ENCODE measurements at regions of chr4 and their contacts with region 1.

Region 1: DNA sequence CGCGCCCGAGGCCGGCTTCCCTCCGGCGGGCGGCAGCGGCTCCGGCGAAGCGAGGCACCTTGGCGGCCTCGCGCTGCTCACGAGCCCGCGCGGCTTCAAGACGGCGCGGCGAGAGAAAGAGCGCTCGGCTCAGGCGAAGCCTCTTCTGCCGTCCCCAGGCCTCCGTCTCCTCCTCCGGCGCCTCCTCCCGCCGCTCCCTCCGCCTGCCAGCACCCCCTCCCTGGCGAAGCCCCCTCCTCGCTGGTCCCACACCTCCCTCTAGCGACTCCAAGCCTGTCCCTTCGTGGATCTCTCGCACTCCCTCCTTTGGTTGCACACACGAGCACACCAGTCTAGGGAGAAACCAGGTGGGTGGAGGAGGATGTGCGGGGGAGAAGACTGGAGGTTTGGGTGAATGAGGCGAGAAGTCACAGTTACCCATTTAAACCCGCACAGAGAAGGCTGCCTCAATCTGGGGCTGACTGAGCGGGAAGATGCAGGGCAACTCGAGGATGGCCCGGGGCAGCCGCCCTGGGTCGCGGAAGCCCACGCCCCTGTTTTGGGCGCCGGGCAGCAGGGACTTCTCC is at the start of gene CAMK2D:
- DNase-seq: peak; percentile 82 to 93 (median 85)
- H3K4me3 ChIP-seq: peak within 1 kb of the TSS; percentile 73 to 87
- H3K4me3 Mint-ChIP-seq: peak within 1 kb of the TSS; percentile 93 to 98 (median 96)
- H3K27ac ChIP-seq: peak within 1 kb of the TSS; percentile 92
- H3K27ac Mint-ChIP-seq: peak within 1 kb of the TSS; percentile 91 to 100 (median 99)
- H3K4me1 ChIP-seq: peaks cover 36% of the 10 kb centered on the region
- H3K4me1 Mint-ChIP-seq: peaks cover 24 to 54% (median 25%) of the 10 kb centered on the region in 4 donors
- H3K27me3 ChIP-seq: no peaks in the 10 kb centered on the region
- H3K27me3 Mint-ChIP-seq: no peaks in the 10 kb centered on the region
- total RNA-seq, gene CAMK2D: 32.1 to 36.4 TPM

Region 2: DNA sequence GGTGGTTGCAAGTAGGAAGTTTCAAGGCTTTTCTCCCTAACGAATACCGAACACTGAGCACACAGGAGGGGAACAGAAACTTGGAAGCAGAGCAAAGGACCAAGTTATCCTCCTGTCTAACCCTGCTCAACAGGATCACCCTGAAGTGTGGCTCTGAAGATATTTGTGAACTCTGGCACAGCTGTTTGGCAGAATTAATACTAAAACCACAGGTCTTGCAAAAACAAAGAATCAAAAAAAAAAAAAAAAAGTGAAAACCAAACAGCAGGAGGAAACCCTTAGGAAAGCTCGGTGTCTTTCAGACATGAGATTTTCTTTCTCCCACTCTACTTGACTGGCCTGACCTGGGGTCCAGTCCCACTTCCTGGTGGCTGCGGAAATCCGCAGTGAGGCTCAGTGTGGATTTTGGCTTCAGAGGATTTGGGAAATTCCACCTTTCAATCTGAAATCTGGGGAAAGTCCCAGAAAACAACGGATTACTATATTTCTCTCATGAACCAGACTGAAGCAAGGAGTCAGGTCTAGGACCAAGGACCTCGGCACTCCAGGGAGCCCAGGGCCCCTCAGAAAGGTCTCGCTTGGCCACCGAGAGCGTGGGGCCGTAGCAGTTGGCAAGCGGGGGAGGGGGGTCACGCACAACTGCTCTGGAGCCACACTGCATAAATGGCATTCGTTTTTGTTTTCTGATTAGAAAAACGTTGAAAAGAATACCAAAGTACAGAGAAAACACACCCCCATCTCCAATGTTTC is 1476.9 kb before region 1 on chr4:
- CTCF ChIA-PET with region 1: no interaction called
- POLR2A ChIA-PET with region 1: no interaction called
- intact Hi-C with region 1: loop called (anchors 2 kb)
- DNase-seq: peak in 3 of 5 donors; percentile 15 to 22 (median 15)
- H3K4me3 ChIP-seq: peak overlapping the region; percentile 88 to 94
- H3K4me3 Mint-ChIP-seq: peak overlapping the region; percentile 92 to 98 (median 96)
- H3K27ac ChIP-seq: peak overlapping the region; percentile 79
- H3K27ac Mint-ChIP-seq: peak overlapping the region; percentile 91 to 99 (median 94)
- H3K4me1 ChIP-seq: peaks cover 85% of the 10 kb centered on the region
- H3K4me1 Mint-ChIP-seq: peaks cover 58 to 96% (median 75%) of the 10 kb centered on the region in 4 donors
- H3K27me3 ChIP-seq: no peaks in the 10 kb centered on the region
- H3K27me3 Mint-ChIP-seq: no peaks in the 10 kb centered on the region

Region 3: DNA sequence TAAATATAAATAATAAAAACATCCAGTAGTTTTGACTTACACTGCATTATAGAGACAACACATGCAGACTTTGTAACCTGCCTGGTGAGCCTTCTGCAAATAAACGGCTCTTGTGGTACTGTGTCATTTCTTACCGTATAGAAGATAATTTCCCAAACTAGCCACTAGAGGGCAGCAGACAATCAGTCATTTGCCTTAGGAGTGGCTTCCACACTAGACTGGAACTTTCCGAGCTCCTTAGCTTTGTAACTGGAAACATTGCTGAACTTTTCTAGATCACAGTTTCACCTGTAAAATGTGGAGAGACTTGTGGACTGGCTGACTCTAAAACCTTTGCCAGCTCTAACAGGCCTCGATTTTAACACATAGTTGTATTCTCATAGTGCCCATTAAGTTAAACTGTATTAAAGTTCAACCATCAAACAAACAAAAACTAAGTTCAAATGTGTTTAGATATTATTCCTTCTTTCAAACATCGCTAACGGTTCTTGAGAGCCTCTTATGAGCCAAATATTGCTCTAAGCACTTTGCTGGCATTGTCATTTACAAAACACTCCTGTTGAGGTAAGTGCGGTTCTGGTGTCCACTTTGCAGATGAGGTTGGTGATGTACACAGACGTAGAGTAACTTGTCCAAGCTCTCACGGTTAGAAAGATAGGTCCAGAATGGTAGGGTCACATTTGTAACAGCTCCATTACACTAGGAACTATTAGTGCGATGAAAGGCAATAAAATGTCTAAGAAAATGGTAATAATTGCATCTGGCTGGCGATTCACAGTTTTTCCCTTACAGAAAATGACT is 366.8 kb before region 1 on chr4:
- CTCF ChIA-PET with region 1: no interaction called
- POLR2A ChIA-PET with region 1: no interaction called
- intact Hi-C with region 1: loop called (anchors 1 kb)
- DNase-seq: peak; percentile 55 to 75 (median 73)
- H3K4me3 ChIP-seq: no peak overlapping the region
- H3K4me3 Mint-ChIP-seq: no peak overlapping the region
- H3K27ac ChIP-seq: no peak overlapping the region
- H3K27ac Mint-ChIP-seq: no peak overlapping the region
- H3K4me1 ChIP-seq: no peaks in the 10 kb centered on the region
- H3K4me1 Mint-ChIP-seq: peaks cover 0 to 4% (median 0%) of the 10 kb centered on the region in 4 donors
- H3K27me3 ChIP-seq: peaks cover 6% of the 10 kb centered on the region
- H3K27me3 Mint-ChIP-seq: no peaks in the 10 kb centered on the region

Region 4: DNA sequence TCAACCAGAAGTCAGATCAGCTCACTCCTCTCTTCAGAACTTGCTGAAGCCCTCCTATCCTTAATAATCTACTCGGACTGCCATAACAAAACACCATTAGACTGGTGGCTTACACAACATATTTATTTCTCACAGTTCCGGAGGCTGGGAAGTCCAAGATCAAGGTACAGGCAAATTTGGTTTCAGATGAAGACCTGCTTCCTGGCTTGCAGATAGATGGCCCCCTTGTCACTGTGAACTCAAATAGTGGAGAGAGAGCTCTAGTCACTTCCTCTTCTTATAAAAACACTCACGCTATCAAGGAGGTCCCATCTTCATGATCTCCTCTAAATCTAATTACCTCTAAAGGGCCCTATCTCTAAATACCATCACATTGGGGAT is 125.3 kb before region 1 on chr4:
- CTCF ChIA-PET with region 1: interaction called, 6 read pairs
- POLR2A ChIA-PET with region 1: interaction called, 12 read pairs
- intact Hi-C with region 1: loop called (anchors 1 kb)
- DNase-seq: peak; percentile 35 to 48 (median 42)
- H3K4me3 ChIP-seq: no peak overlapping the region
- H3K4me3 Mint-ChIP-seq: peak overlapping the region in 7 of 8 donors; percentile 53 to 82 (median 61)
- H3K27ac ChIP-seq: peak overlapping the region; percentile 29
- H3K27ac Mint-ChIP-seq: peak overlapping the region; percentile 65 to 85 (median 83)
- H3K4me1 ChIP-seq: peaks cover 48% of the 10 kb centered on the region
- H3K4me1 Mint-ChIP-seq: peaks cover 42 to 61% (median 48%) of the 10 kb centered on the region in 4 donors
- H3K27me3 ChIP-seq: no peaks in the 10 kb centered on the region
- H3K27me3 Mint-ChIP-seq: no peaks in the 10 kb centered on the region

Region 5: DNA sequence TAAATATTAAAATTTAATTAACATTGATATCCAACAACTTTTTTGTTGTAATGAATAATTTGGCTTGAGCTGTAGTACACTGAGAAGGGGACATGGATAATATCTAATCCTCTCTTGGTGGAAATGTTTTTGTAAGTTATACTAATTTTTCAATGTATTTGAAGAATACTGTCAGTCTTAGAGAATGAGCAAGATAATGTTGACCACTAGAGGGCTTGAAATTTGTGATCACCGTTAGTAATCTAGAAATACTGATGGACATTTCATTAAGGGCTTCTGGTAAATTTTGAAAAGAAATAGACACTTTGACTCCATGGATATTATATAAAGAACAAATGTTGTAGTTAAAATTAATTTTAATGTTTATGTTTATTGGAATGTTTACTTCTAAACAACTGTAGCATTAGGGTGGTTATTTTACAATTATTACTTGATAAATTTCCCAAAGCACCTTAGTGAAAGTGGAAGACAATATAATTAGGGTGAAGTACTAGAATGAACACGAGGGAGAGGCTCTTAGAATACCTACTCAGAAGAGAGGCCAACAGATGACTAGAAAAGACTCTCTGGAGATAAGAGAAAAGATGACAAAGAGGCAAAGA is 19.8 kb after region 1 on chr4:
- CTCF ChIA-PET with region 1: interaction called, 3 read pairs
- POLR2A ChIA-PET with region 1: no interaction called
- intact Hi-C with region 1: loop called (anchors 2 kb)
- DNase-seq: peak in 4 of 5 donors; percentile 25 to 35 (median 30)
- H3K4me3 ChIP-seq: no peak overlapping the region
- H3K4me3 Mint-ChIP-seq: no peak overlapping the region
- H3K27ac ChIP-seq: no peak overlapping the region
- H3K27ac Mint-ChIP-seq: no peak overlapping the region
- H3K4me1 ChIP-seq: no peaks in the 10 kb centered on the region
- H3K4me1 Mint-ChIP-seq: peaks cover 0 to 8% (median 2%) of the 10 kb centered on the region in 4 donors
- H3K27me3 ChIP-seq: no peaks in the 10 kb centered on the region
- H3K27me3 Mint-ChIP-seq: peaks cover 0 to 1% of the 10 kb centered on the region in 2 donors

Region 6: GRCh38 chr4:114349543-114350175 is 588.0 kb after region 1 on chr4:
- CTCF ChIA-PET with region 1: no interaction called
- POLR2A ChIA-PET with region 1: no interaction called
- intact Hi-C with region 1: no loop called
- DNase-seq: no peak
- H3K4me3 ChIP-seq: no peak overlapping the region
- H3K4me3 Mint-ChIP-seq: no peak overlapping the region
- H3K27ac ChIP-seq: no peak overlapping the region
- H3K27ac Mint-ChIP-seq: no peak overlapping the region
- H3K4me1 ChIP-seq: no peaks in the 10 kb centered on the region
- H3K4me1 Mint-ChIP-seq: no peaks in the 10 kb centered on the region
- H3K27me3 ChIP-seq: no peaks in the 10 kb centered on the region
- H3K27me3 Mint-ChIP-seq: no peaks in the 10 kb centered on the region

Measured in CD4-positive, alpha-beta memory T cell (primary cell).